ENCODE measurements at regions of chr21 and their contacts with region 1.

Region 1: DNA sequence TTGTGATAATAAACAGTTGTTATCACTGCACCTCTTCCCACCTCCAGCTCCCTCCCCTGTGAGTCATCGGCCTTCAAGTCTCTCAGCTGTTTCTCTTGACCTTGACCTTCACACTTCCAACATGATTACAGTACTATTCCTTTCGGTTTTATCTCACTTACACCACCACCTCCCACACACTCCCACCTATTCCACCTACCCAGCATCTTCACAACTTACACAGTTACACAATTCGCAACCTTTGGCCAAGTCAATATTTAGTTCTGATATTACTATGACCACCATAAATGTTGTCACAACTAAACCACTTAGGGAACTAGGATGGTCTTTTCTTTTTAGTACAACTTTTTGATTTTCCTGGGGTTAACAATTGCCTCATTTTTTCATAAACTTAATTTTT is 60.2 kb downstream of the RIPK4 start:
- DNase-seq: peak in 1 of 2 experiments; percentile 80
- H3K4me3 ChIP-seq: no peak overlapping the region
- H3K27ac ChIP-seq: peak overlapping the region; percentile 93
- H3K4me1 ChIP-seq: peaks cover 79% of the 10 kb centered on the region
- H3K27me3 ChIP-seq: no peaks in the 10 kb centered on the region
- CTCF ChIP-seq: no peak

Region 2: DNA sequence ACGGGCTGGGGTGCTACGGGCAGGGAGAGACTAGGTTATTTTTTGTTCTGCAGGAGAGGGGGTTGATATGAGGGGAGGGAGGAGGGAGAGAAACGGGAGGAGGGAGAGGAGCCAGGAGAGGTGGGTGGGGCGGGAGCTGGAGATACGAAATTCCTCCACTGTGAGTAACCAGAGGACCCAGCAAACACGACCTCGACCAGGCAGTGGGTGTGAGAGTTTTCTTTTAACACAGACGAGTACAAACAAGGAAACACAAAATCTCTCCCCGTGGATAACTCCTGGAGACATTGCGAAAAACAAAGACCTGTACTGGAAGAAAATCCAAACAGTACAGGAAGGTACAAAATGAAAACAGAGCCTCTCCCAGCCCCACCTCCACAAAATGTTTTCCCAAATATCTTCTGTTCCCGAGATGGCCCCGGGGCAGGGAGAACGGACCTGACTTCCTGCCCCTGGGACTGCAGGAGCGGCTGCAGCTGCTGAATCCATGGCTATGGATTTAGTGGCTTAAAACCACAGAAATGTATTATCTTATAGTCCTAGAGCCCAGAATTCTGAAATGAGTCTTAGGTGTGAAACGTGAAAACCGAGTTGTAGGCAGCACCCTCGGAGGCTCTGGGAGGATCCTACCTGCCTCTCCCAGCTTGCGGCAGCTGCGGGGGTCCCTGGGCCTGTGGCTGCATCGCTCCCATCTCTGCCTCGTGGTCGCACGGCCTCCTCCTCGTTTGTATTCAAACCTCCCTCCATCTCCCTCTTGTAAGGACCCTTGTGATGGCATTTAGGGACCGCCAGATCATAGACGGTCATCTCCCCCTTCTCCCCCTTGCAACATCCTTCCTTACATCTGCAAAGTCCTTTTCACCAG is 22.1 kb before region 1 on chr21:
- CTCF ChIA-PET with region 1: no interaction called
- POLR2A ChIA-PET with region 1: no interaction called
- intact Hi-C with region 1: loop called (anchors 1 kb)
- DNase-seq: peak; percentile 69 to 92
- H3K4me3 ChIP-seq: peak overlapping the region; percentile 7; the same call in 1 of the 2 replicates
- H3K27ac ChIP-seq: peak overlapping the region; percentile 99
- H3K4me1 ChIP-seq: peaks cover 77% of the 10 kb centered on the region
- H3K27me3 ChIP-seq: no peaks in the 10 kb centered on the region
- CTCF ChIP-seq: no peak

Region 3: GRCh38 chr21:41726945-41727783 is 20.5 kb after region 1 on chr21:
- CTCF ChIA-PET with region 1: no interaction called
- POLR2A ChIA-PET with region 1: no interaction called
- intact Hi-C with region 1: loop called (anchors 1 kb)
- DNase-seq: peak; percentile 89 to 93
- H3K4me3 ChIP-seq: peak overlapping the region; percentile 27; the same call in 1 of the 2 replicates
- H3K27ac ChIP-seq: peak overlapping the region; percentile 93
- H3K4me1 ChIP-seq: peaks cover 56% of the 10 kb centered on the region
- H3K27me3 ChIP-seq: no peaks in the 10 kb centered on the region
- CTCF ChIP-seq: peak; percentile 37; the same call in 1 of the 2 replicates

Region 4: GRCh38 chr21:41761211-41762181 is 54.8 kb after region 1 on chr21:
- CTCF ChIA-PET with region 1: no interaction called
- POLR2A ChIA-PET with region 1: interaction called, 12 read pairs
- intact Hi-C with region 1: no loop called
- DNase-seq: peak; percentile 87 to 91
- H3K4me3 ChIP-seq: peak overlapping the region; percentile 100
- H3K27ac ChIP-seq: peak overlapping the region; percentile 99
- H3K4me1 ChIP-seq: peaks cover 44% of the 10 kb centered on the region
- H3K27me3 ChIP-seq: no peaks in the 10 kb centered on the region
- CTCF ChIP-seq: no peak

Region 5: GRCh38 chr21:41768437-41769061 is 61.9 kb after region 1 on chr21:
- CTCF ChIA-PET with region 1: no interaction called
- POLR2A ChIA-PET with region 1: interaction called, 12 read pairs
- intact Hi-C with region 1: no loop called
- DNase-seq: peak; percentile 28 to 80
- H3K4me3 ChIP-seq: peak overlapping the region; percentile 100
- H3K27ac ChIP-seq: peak overlapping the region; percentile 99
- H3K4me1 ChIP-seq: peaks cover 12% of the 10 kb centered on the region
- H3K27me3 ChIP-seq: no peaks in the 10 kb centered on the region
- CTCF ChIP-seq: no peak; the same call in 1 of the 2 replicates